HAP-1 (cell line): ENCODE measurements at regions of chr15 and their contacts with region 1.

Region 1: DNA sequence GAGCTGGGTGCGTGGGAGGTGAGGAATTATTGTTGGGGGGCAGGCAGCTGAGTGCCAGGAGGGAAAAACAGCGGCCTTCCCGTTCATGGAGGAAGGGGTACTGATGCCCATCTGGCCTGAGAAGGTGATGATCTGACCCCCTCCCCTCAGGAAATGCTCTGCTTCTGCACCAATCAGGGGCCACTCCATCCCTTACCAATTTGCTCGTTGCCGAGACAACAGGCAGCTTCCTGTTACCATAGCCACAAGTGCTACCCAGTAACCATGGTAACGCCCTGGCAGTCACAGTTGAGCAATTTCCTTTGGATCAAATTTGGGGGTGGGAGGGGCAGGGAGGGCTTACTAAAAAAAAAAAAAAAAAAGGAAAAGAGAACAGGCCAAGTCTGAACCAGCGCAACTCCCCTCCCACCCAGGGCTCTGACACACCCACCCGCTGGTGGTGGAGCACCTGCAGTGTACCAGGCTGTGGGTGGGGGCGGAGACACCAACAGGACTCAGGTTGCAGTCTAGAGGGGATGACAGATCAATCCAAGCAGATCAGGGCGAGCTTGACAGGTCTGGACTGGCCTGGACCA is 13.7 kb downstream of the CELF6 start:
- DNase-seq: peak in 1 of 2 experiments; percentile 51
- H3K4me3 ChIP-seq: no peak overlapping the region
- H3K4me1 ChIP-seq: no peaks in the 10 kb centered on the region
- H3K27me3 ChIP-seq: peaks cover 36% of the 10 kb centered on the region

Region 2: DNA sequence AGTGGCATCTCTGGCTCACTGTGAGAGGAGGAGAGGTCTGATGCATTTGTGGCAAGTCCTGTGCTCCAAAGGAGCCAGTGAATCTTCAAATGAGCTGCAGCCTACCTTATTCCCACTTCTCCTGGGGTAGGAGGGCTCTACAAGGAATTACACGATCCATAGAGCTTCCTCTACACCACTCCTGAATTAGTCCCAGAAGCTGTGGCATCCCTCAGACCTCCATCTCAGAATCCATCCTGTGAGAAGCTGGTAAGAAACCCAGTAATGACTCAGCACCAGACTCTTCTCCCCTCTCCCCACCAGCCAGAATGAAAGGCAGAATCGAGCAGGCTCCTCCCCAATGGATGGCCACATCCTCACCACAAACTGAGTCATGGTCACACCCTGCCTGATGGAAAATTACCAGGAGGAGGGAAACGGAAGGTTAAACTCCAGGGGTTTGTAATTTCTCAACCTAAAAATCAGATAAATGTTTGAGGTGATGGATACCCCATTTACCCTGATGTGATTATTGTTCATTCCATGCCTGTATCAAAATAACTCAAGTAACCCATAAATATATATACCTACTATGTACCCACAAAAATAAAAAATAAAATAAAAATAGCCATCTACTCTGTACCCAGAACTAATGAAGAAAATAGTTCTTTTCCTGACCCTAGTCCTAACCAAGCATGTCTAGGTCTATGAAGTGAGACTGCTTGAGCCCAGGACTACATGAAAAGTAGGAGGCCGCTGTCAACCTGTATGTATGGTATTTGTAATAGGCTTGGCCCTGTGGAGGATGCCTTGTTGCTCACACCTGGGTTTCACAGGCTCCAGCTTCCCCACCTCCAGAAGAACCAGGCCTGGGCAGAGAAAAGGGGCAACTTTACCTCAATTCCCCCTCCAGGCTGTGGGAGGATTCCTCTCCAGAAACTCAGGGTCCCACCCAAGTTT is 68.7 kb before region 1 on chr15:
- in situ Hi-C with region 1: no loop called
- DNase-seq: peak in 1 of 2 experiments; percentile 48
- H3K4me3 ChIP-seq: no peak overlapping the region
- H3K4me1 ChIP-seq: no peaks in the 10 kb centered on the region
- H3K27me3 ChIP-seq: no peaks in the 10 kb centered on the region

Region 3: GRCh38 chr15:73941044-73941443 is 1634.7 kb after region 1 on chr15:
- in situ Hi-C with region 1: loop called (anchors 10 kb)
- DNase-seq: no peak
- H3K4me3 ChIP-seq: no peak overlapping the region
- H3K4me1 ChIP-seq: peaks cover 3% of the 10 kb centered on the region
- H3K27me3 ChIP-seq: no peaks in the 10 kb centered on the region